Astrocyte of the cerebellum (primary cell): ENCODE measurements at regions of chr1 and their contacts with region 1.

Region 1: GRCh38 chr1:240189386-240189989 is 97.8 kb downstream of the FMN2 start:
- DNase-seq: peak; percentile 16
- H3K4me3 ChIP-seq: no peak overlapping the region
- CTCF ChIP-seq: peak; percentile 78

Region 2: GRCh38 chr1:239976130-239976968 is 213.1 kb before region 1 on chr1:
- in situ Hi-C with region 1: no loop called
- DNase-seq: peak; percentile 33
- H3K4me3 ChIP-seq: no peak overlapping the region
- CTCF ChIP-seq: peak; percentile 98

Region 3: GRCh38 chr1:240621231-240621810 is 431.8 kb after region 1 on chr1:
- in situ Hi-C with region 1: no loop called
- DNase-seq: no peak
- H3K4me3 ChIP-seq: no peak overlapping the region
- CTCF ChIP-seq: no peak

Region 4: DNA sequence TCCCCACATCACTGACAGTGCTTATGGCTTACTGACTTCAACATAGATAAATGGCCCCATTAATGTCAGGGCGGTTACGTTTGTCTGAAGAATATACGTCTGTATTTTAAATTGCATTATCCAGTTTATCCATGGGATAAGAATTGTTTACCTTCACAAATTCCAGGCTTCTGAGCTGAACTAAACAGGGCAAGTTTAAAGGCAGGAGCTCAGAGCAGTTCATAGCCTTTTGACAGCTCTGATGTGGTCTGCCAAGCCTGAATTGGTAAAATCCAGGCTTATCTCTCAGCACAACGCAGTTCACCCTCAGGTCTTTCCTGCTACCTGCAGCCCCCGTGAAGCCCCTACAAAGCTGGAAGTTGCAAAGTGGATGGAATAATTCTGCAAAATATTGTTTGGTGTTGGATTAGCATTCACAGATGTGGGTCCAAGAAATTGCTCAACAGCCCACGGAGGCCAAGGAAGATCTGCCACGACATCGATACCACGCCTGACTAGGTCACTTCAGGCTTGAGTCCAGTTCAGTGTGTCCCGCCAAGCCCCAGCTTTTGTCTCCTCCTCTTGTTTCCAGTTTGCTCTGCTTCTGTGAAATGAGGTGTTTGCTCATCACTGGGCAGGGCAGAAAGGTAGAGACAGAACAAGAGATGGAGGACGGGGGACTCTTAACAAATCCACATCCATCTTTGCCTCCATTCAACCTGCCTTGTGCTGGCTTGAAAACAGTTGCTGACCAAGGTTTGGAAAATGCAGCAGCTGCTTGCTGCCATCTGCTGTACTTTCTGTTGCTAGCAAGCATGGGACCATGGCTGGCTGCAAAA is 502.2 kb after region 1 on chr1:
- in situ Hi-C with region 1: loop called (anchors 5 kb)
- DNase-seq: peak; percentile 59
- H3K4me3 ChIP-seq: no peak overlapping the region
- CTCF ChIP-seq: peak; percentile 96